ENCODE measurements at regions of chr17 and their contacts with region 1.

Region 1: DNA sequence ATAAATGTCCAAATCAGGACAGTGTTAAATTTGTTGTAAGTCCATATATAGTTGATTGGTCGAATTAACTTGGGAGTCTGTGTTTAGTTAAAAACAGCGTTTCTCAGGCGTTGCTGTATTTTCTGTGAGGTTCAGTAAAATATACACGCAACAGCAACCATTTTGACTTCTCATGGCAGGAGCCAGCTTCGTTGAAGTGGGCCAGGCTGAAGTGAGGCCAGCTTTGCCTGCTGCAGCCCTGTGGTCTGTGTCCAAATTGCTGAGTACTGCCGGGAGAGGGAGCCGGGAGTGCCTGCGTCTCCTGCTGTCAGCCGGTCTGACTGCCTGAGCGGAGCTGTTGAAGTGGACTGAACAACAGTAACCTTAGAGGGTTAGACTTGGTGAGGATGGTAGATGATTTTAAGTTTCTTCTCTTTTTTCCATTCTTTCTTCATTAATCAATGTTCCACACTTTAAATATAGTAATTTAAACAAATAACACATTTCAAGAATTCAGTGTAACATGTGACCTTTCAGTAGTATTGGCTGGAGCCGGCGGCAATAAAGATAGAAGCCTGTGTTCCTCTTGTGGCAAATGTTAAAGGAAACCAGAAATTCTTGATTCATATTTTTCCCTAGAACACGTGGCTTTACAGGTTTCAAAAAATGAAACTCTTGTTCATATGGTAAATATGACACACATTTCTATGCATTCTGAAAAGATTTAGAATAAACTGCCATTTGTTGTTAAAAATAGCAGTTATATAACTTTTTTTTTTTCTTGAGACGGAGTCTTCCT is 37.0 kb upstream of the ZNF750 start:
- DNase-seq: peak; percentile 79
- H3K4me3 ChIP-seq: no peak overlapping the region
- H3K27ac ChIP-seq: peak overlapping the region; percentile 52
- H3K4me1 ChIP-seq: peaks cover 19% of the 10 kb centered on the region
- H3K27me3 ChIP-seq: no peaks in the 10 kb centered on the region
- CTCF ChIP-seq: peak; percentile 37 to 61
- POLR2A ChIP-seq: no peak

Region 2: GRCh38 chr17:82781894-82782274 is 94.9 kb before region 1 on chr17:
- CTCF ChIA-PET with region 1: interaction called, 37 read pairs
- POLR2A ChIA-PET with region 1: no interaction called
- dilution Hi-C with region 1: no loop called
- intact Hi-C with region 1: loop called (anchors 1 kb)
- DNase-seq: peak; percentile 75
- H3K4me3 ChIP-seq: no peak overlapping the region
- H3K27ac ChIP-seq: no peak overlapping the region
- H3K4me1 ChIP-seq: peaks cover 2% of the 10 kb centered on the region
- H3K27me3 ChIP-seq: no peaks in the 10 kb centered on the region
- CTCF ChIP-seq: peak; percentile 97 to 98
- POLR2A ChIP-seq: no peak

Region 3: GRCh38 chr17:82854221-82854620 is 22.6 kb before region 1 on chr17:
- CTCF ChIA-PET with region 1: interaction called, 17 read pairs
- POLR2A ChIA-PET with region 1: no interaction called
- dilution Hi-C with region 1: no loop called
- intact Hi-C with region 1: no loop called
- DNase-seq: no peak
- H3K4me3 ChIP-seq: no peak overlapping the region
- H3K27ac ChIP-seq: no peak overlapping the region
- H3K4me1 ChIP-seq: peaks cover 6% of the 10 kb centered on the region
- H3K27me3 ChIP-seq: no peaks in the 10 kb centered on the region
- CTCF ChIP-seq: no peak
- POLR2A ChIP-seq: no peak

Region 4: DNA sequence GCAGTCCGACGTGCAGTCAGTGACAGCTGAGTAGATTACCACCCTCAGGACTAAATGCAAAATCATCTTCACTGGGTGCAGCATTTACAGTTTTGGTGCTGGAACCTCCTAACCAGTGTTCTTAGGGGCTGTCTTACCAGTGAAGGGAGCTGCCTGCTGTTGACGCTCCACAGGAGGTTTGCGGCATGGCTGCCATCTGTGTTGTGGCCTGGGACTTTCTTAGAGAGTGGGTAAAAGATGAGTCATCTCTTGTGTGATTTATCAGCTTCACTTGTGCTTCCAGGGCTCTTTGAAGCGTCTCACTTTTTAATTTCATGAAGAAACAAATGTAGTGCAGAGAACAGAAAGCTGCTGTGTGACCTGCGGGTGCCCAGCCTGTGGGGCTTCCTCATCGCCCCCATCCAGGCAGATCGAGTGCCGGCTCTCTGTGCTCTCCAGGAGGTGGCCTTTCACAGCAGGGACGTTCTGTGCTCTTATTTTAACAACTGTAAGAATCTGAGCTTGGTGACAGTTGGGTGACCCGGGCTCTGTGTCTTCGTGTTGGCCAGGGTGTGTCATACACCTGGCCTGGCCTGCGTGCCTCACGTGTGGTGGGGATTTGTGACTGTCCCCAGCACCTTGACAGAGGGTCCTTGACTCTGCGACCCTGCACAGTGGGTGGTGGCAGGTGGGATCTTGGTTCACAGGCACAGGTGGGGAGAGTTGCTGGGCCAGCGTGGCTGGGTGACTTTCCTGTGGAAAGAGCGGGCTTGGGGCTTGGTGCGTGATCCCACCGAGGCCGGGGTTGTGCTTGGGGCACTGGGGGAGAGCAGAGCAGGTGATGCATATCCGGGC is 12.6 kb before region 1 on chr17:
- CTCF ChIA-PET with region 1: interaction called, 13 read pairs
- POLR2A ChIA-PET with region 1: interaction called, 3 read pairs
- dilution Hi-C with region 1: no loop called
- intact Hi-C with region 1: loop called (anchors 1 kb)
- DNase-seq: peak; percentile 40
- H3K4me3 ChIP-seq: no peak overlapping the region
- H3K27ac ChIP-seq: no peak overlapping the region
- H3K4me1 ChIP-seq: peaks cover 39% of the 10 kb centered on the region
- H3K27me3 ChIP-seq: no peaks in the 10 kb centered on the region
- CTCF ChIP-seq: no peak
- POLR2A ChIP-seq: no peak

Region 5: DNA sequence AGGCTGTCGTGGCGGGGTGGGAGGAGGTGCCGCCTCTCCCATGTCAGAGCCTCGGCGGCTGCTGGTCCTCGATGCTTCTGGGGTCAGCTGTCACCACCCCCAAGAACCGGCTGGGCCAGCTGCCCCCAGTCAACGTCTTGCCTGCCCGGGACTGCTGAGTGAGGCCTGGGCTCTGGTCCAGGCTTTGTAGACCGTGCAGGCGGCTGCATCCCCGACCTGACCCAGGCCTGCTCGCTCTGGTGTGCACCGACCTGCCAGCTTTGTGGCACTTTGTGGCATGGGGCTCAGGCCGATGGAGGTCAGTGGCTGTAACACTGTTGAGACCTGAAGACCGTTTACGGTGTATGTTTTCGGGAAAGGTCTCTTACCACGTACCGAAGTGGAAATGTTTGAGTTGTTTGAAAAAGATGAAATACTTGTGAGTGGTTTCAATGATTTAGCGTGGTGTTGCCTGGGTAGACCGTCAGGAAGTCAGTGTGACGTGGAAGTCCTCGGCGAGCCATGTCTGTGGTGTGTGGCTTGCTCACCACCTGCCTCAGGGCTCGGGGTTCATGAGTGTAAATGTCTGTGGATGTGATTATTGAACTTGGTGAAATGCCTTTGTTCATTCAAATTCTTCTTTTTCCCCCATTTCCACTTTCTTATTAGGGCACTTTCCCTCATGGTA is 16.2 kb after region 1 on chr17:
- CTCF ChIA-PET with region 1: interaction called, 20 read pairs
- POLR2A ChIA-PET with region 1: no interaction called
- dilution Hi-C with region 1: no loop called
- intact Hi-C with region 1: no loop called
- DNase-seq: peak; percentile 47
- H3K4me3 ChIP-seq: no peak overlapping the region
- H3K27ac ChIP-seq: no peak overlapping the region
- H3K4me1 ChIP-seq: no peaks in the 10 kb centered on the region
- H3K27me3 ChIP-seq: no peaks in the 10 kb centered on the region
- CTCF ChIP-seq: no peak
- POLR2A ChIP-seq: no peak

Region 6: DNA sequence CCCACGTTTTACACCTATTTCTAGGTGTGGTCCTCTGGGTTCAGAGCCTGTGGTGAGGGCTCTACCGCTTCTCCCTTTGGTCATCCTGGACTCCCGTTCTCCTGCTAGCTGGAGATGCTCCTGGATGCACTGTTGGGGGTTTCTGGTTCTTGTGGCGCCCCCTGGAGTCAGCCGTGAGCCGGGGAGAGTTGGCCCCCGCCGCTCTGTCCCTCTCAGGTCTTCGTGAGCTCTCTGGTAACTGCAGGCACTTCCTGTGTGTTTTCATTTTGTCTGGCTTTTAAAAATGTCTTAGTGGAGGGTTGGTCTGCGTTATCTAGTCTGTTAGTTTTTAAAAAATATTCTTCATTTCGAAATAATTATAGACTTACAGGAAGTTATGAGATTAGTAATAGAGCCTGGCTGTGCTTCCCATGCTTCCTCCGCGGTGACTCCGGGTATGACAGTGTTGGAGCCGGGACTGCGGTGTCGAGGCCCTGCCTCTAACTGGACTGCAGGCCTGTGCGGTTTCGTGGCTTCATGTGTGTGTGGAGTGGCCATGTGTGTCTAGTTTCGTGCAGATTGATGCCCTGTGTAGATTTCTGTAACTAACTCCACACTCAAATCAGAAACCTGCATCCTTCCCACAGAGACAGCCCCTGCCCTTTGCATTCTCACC is 41.0 kb after region 1 on chr17:
- CTCF ChIA-PET with region 1: interaction called, 19 read pairs
- POLR2A ChIA-PET with region 1: no interaction called
- dilution Hi-C with region 1: no loop called
- intact Hi-C with region 1: loop called (anchors 2 kb)
- DNase-seq: peak; percentile 21
- H3K4me3 ChIP-seq: no peak overlapping the region
- H3K27ac ChIP-seq: no peak overlapping the region
- H3K4me1 ChIP-seq: no peaks in the 10 kb centered on the region
- H3K27me3 ChIP-seq: no peaks in the 10 kb centered on the region
- CTCF ChIP-seq: peak; percentile 41 to 65
- POLR2A ChIP-seq: no peak